ENCODE measurements at regions of chr11 and their contacts with region 1.

Region 1: GRCh38 chr11:59429924-59430516 is 3.8 kb upstream of the OR5A2 start:
- DNase-seq: peak; percentile 60
- CTCF ChIP-seq: peak; percentile 46

Region 2: GRCh38 chr11:59152312-59152951 is 277.6 kb before region 1 on chr11:
- in situ Hi-C with region 1: no loop called
- DNase-seq: no peak
- CTCF ChIP-seq: no peak

Region 3: GRCh38 chr11:59186130-59186594 is 243.9 kb before region 1 on chr11:
- in situ Hi-C with region 1: loop called (anchors 10 kb)
- DNase-seq: peak; percentile 80
- CTCF ChIP-seq: peak; percentile 55

Region 4: GRCh38 chr11:59289356-59290181 is 140.5 kb before region 1 on chr11:
- in situ Hi-C with region 1: loop called (anchors 10 kb)
- DNase-seq: no peak
- CTCF ChIP-seq: no peak

Region 5: GRCh38 chr11:59767225-59767611 is 337.2 kb after region 1 on chr11:
- in situ Hi-C with region 1: no loop called
- DNase-seq: no peak
- CTCF ChIP-seq: no peak

Measured in GM13976 (cell line).